Panc1 (cell line): ENCODE measurements at regions of chr11 and their contacts with region 1.

Region 1: GRCh38 chr11:67387518-67387917 is 4.3 kb upstream of the RAD9A start:
- DNase-seq: no peak
- ATAC-seq: no peak
- H3K4me3 ChIP-seq: no peak overlapping the region
- H3K27ac ChIP-seq: no peak overlapping the region
- H3K4me1 ChIP-seq: peaks cover 11% of the 10 kb centered on the region
- H3K27me3 ChIP-seq: no peaks in the 10 kb centered on the region
- CTCF ChIP-seq: no peak

Region 2: GRCh38 chr11:67027483-67028196 is 359.9 kb before region 1 on chr11:
- CTCF ChIA-PET with region 1: no interaction called
- POLR2A ChIA-PET with region 1: interaction called, 18 read pairs
- in situ Hi-C with region 1: no loop called
- intact Hi-C with region 1: no loop called
- DNase-seq: no peak
- ATAC-seq: no peak
- H3K4me3 ChIP-seq: no peak overlapping the region
- H3K27ac ChIP-seq: no peak overlapping the region
- H3K4me1 ChIP-seq: peaks cover 13% of the 10 kb centered on the region
- H3K27me3 ChIP-seq: 0 out of 2 replicates have a peak, but pooled peaks cover 1% of the 10 kb centered on the region
- CTCF ChIP-seq: no peak